ENCODE measurements at regions of chr17 and their contacts with region 1.

Region 1: GRCh38 chr17:74987418-74987908 is at the start of gene CDR2L:
- DNase-seq: peak; percentile 79 to 97
- H3K4me3 ChIP-seq: peak within 1 kb of the TSS; percentile 82 to 93 (median 84)
- H3K27ac ChIP-seq: peak within 1 kb of the TSS; percentile 62
- H3K4me1 ChIP-seq: peaks cover 0 to 7% (median 6%) of the 10 kb centered on the region in 4 experiments; a peak in 6 of 7 replicates
- H3K27me3 ChIP-seq: no peaks in the 10 kb centered on the region
- CTCF ChIP-seq: no peak
- EP300 ChIP-seq: peak in 1 of 2 experiments; percentile 55; a peak in 1 of 3 replicates
- POLR2A ChIP-seq: peak; percentile 69 to 87
- RAD21 ChIP-seq: no peak
- total RNA-seq, gene CDR2L: 38.1 and 40.5 TPM in 2 replicates

Region 2: DNA sequence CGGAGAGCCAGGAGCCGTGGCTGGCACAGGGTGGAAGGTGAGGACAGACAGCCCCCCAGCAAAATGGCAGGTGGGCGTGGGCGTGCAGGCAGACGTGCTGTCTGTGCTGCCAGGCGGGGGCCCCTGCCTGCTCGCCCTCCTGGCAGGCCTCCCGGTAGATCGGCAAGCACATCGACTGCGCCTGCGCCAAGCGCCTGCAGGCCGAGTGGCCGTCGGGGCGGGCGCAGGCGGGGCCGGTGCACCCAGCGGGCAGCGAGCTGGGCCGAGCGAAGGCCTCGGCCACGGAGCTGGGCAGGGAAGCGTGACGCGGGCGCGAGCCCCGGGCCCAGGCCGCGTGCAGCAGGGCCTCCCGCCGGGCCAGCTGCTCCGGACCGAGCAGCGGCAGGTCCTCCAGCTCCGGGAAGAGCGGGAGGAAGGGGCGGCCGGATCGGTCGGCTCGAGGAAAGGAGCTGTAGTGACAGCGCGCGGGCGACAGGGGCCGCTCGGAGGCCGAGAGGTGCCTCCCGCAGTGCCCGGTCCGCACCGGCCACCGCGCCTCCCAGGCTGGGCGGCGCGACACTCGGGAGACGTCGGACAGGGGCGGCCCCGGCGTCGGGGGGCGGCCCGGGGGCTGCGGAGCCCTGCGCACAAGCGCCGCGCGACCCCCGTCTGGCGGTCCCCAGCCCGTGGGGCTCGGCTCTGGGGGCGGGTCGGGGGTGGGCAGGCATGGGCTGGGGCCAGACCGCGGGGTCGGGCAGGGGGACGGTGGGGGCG is 144.7 kb before region 1 on chr17:
- CTCF ChIA-PET with region 1: no interaction called
- POLR2A ChIA-PET with region 1: no interaction called
- DNase-seq: peak in 1 of 2 experiments; percentile 88
- H3K4me3 ChIP-seq: peak overlapping the region; percentile 35 to 57 (median 43); a peak in 7 of 8 replicates
- H3K27ac ChIP-seq: no peak overlapping the region
- H3K4me1 ChIP-seq: peaks cover 0 to 29% (median 14%) of the 10 kb centered on the region in 4 experiments; a peak in 6 of 7 replicates
- H3K27me3 ChIP-seq: peaks cover 16 to 54% (median 43%) of the 10 kb centered on the region in 4 experiments
- CTCF ChIP-seq: peak; percentile 64 to 71 (median 70)
- EP300 ChIP-seq: no peak
- POLR2A ChIP-seq: no peak
- RAD21 ChIP-seq: peak; percentile 45 to 65

Region 3: DNA sequence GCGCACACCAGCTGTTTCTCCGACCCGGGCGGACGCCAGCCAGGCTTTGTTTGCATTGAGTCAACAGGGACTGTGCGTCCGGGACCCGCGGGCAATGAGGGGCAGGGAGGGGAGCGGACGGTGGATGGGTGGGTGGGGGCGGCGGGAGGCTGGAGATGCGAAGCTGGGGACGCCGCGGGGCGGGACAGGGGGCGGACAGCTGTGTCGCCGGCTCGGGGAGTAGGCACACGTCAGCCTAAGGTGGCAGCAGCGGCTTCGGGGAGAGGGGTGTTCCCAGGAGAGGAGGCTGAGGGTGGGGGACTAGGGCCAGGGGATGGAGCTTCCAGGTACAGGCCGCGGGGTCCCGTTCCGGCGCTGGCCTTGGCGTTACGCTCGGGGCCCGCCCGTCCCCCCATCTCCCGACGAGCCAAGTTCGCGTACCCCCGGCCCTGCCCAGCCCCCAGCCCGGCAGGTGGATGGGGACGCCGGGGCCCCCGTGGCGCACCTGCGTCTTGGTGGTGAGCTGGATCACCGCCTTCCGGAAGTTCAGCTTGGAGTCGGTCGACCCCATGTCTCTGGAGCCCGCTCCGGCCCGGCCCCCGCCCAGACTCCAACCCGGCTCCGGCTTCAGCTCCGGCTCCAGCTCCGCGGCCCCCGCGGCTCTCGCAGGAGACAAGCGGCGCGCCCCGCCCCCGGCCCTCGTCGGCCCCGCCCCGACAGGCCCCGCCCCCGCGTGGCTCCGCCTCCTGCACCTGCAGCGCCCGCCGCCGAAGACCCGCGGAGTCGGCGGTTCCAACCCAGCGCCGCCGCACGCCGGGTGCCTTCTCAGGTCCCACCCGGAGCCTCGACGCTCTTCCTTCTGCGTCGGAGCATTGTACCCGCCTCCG is 15.1 kb before region 1 on chr17 and contains the start of gene HID1:
- CTCF ChIA-PET with region 1: interaction called, 30 read pairs
- POLR2A ChIA-PET with region 1: interaction called, 25 read pairs
- DNase-seq: peak in 1 of 2 experiments; percentile 91
- H3K4me3 ChIP-seq: peak within 1 kb of the TSS; percentile 62 to 92 (median 62)
- H3K27ac ChIP-seq: no peak within 1 kb of the TSS
- H3K4me1 ChIP-seq: peaks cover 0 to 15% (median 9%) of the 10 kb centered on the region in 4 experiments; a peak in 6 of 7 replicates
- H3K27me3 ChIP-seq: peaks cover 17 to 43% (median 37%) of the 10 kb centered on the region in 4 experiments
- CTCF ChIP-seq: no peak
- EP300 ChIP-seq: no peak
- POLR2A ChIP-seq: no peak
- RAD21 ChIP-seq: no peak
- total RNA-seq, gene HID1: 13.8 and 15.1 TPM in 2 replicates

Region 4: GRCh38 chr17:75001915-75002843 is 14.7 kb after region 1 on chr17:
- CTCF ChIA-PET with region 1: interaction called, 74 read pairs
- POLR2A ChIA-PET with region 1: interaction called, 22 read pairs
- DNase-seq: no peak
- H3K4me3 ChIP-seq: no peak overlapping the region
- H3K27ac ChIP-seq: no peak overlapping the region
- H3K4me1 ChIP-seq: no peaks in the 10 kb centered on the region
- H3K27me3 ChIP-seq: no peaks in the 10 kb centered on the region
- CTCF ChIP-seq: no peak
- EP300 ChIP-seq: no peak
- POLR2A ChIP-seq: no peak
- RAD21 ChIP-seq: no peak

Region 5: DNA sequence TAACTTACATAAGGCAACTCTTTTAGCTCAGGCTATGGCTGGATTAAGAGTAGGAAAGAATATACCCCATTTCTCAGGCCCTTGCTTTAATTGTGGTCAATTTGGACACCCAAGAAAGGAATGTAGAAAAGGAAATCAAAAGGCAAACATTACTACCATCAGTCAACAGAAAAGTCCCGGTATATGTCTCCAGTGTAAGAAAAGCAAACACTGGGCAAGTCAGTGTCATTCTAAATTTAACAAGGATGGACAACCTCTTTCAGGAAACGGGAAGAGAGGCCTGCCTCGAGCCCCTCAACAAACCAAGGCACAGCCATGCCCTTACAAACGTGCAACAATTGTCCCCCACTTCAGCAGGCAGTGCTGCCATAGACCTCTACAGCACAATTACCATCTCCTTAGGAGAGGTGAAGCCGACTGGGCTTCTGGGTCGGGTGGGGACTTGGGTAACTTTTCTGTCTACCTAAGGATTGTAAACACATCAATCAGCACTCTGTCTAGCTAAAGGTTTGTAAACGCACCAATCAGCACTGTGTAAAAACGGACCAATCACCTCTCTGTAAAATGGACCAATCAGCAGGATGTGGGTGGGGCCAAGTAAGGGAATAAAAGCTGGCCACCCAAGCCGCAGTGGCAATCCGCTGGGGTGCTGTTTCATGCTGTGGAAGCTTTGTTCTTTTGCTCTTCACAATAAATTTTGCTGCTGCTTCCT is 37.4 kb after region 1 on chr17:
- CTCF ChIA-PET with region 1: interaction called, 23 read pairs
- POLR2A ChIA-PET with region 1: interaction called, 7 read pairs
- DNase-seq: no peak
- H3K4me3 ChIP-seq: no peak overlapping the region
- H3K27ac ChIP-seq: no peak overlapping the region
- H3K4me1 ChIP-seq: no peaks in the 10 kb centered on the region
- H3K27me3 ChIP-seq: no peaks in the 10 kb centered on the region
- CTCF ChIP-seq: no peak
- EP300 ChIP-seq: no peak
- POLR2A ChIP-seq: no peak
- RAD21 ChIP-seq: no peak

Region 6: GRCh38 chr17:75077496-75078283 is 90.2 kb after region 1 on chr17:
- CTCF ChIA-PET with region 1: no interaction called
- POLR2A ChIA-PET with region 1: no interaction called
- DNase-seq: no peak
- H3K4me3 ChIP-seq: peak overlapping the region in 1 of 4 experiments; percentile 6; a peak in 1 of 8 replicates
- H3K27ac ChIP-seq: no peak overlapping the region
- H3K4me1 ChIP-seq: peaks cover 0 to 16% (median 8%) of the 10 kb centered on the region in 4 experiments; a peak in 6 of 7 replicates
- H3K27me3 ChIP-seq: no peaks in the 10 kb centered on the region
- CTCF ChIP-seq: peak in 2 of 3 experiments; percentile 4; a peak in 1 of 4 replicates
- EP300 ChIP-seq: no peak
- POLR2A ChIP-seq: no peak
- RAD21 ChIP-seq: no peak; a peak in 1 of 4 replicates

Measured in H1 (cell line).